MCF 10A (cell line): ENCODE measurements at regions of chr18 and their contacts with region 1.

Region 1: GRCh38 chr18:3816610-3817363 is 366.8 kb downstream of the TGIF1 start:
- DNase-seq: peak; percentile 79
- H3K4me3 Mint-ChIP-seq: no peak overlapping the region
- H3K27ac Mint-ChIP-seq: peak overlapping the region; percentile 67
- H3K4me1 Mint-ChIP-seq: peaks cover 23% of the 10 kb centered on the region
- H3K27me3 Mint-ChIP-seq: no peaks in the 10 kb centered on the region
- CTCF ChIP-seq: no peak

Region 2: DNA sequence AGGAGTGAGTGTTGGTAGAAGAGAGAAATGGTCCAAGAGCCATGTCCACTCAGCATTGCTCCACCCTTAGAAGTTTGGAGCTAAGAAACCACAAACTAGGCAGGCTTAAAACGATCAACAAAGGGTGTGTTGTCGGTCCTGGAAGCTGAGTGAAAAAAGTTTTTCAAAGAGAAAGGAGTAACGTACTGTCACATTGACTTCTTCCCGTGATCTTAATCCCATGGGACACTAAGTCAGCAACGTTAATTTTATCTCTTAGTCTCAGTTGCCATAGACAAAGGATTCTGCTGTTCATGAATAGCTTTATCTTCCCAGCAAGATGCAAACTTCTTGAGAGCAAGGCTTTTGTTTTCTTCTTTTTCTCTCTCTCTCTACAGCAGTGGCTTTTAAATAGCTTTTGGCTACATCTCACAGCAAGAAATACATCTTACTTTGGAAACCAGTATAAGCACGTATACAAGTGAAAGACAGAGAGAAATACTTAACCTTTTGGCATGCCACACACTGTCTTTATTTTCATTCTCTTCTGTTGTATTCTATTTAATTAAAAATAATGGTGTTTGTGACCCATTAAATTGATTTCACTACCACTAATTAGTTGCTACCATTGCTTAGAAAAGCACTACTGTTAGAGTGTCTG is 10.6 kb after region 1 on chr18:
- CTCF ChIA-PET with region 1: no interaction called
- POLR2A ChIA-PET with region 1: interaction called, 10 read pairs
- intact Hi-C with region 1: no loop called
- DNase-seq: no peak
- H3K4me3 Mint-ChIP-seq: no peak overlapping the region
- H3K27ac Mint-ChIP-seq: no peak overlapping the region
- H3K4me1 Mint-ChIP-seq: peaks cover 14% of the 10 kb centered on the region
- H3K27me3 Mint-ChIP-seq: no peaks in the 10 kb centered on the region
- CTCF ChIP-seq: no peak